ENCODE measurements at regions of chr3 and their contacts with region 1.

Region 1: DNA sequence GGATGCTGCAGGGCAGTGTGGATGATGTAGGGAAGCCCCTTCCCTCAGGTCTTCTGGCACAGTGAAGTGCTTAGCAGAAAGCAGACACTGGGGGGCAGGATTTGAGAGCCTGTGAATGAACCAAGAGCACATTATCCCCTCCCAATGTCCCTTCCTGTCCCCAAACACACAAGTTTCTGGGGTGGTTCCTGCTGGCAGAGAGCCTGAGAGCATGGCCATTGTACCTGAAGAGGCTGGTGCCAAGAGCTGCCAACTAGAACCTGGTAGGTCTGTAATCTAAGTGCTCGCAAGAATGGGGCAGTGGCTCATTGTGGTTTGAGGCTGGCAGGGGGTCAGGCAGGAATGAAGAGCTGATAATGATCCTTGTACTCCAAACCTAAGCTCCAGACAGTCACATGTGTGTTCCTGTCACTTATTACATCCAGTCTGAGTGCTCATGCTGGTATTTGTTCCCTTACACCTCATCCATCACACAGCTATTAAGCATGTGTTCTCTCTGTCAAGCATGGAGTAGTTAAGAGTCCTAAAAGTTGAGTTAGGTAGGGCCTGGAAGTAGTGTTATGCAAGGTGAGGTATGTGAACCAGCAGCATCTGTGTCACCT is 6.7 kb upstream of the CCR1 start:
- DNase-seq: peak; percentile 44
- ATAC-seq: no peak
- H3K4me3 Mint-ChIP-seq: no peak overlapping the region
- H3K27ac Mint-ChIP-seq: no peak overlapping the region
- H3K4me1 Mint-ChIP-seq: no peaks in the 10 kb centered on the region
- H3K27me3 Mint-ChIP-seq: no peaks in the 10 kb centered on the region

Region 2: DNA sequence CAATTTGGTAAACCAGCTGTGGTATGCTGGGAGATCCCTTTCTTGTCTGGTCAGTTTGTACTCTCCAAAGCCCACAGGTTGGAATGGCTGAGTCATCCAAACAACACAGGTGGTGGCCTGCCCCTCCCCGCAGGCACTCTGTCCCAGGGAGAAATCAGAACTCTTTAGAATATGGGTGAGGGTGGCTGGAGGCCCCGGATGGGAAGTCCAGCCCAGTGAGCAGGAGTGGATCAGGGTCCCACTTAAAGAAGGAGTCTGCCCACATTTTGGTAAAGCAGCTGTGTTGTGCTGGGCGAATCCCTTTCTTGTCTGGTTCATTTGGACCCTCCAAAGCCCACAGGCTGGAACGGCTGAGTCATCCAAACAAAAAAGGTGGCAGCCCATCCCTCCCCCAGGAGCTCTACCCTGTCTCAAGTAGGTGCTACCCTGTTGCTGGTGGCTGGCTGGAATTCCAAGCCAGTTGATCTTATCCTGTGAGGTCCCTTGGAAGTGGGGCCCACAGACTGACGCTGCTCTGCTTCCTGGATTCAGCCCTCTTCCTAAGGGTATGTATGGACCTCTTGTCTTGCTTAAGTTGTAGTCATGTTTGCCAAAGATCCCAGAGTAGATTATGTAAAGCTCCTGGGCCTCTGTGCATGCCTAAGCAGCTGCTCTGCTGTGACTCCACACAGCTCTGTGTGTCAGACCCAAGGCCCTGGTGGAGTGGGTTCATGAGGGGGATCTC is 51.4 kb before region 1 on chr3:
- CTCF ChIA-PET with region 1: no interaction called
- POLR2A ChIA-PET with region 1: no interaction called
- intact Hi-C with region 1: no loop called
- DNase-seq: no peak
- ATAC-seq: no peak
- H3K4me3 Mint-ChIP-seq: no peak overlapping the region
- H3K27ac Mint-ChIP-seq: no peak overlapping the region
- H3K4me1 Mint-ChIP-seq: no peaks in the 10 kb centered on the region
- H3K27me3 Mint-ChIP-seq: peaks cover 3% of the 10 kb centered on the region

Region 3: GRCh38 chr3:46233194-46233593 is 18.3 kb after region 1 on chr3:
- CTCF ChIA-PET with region 1: no interaction called
- POLR2A ChIA-PET with region 1: no interaction called
- intact Hi-C with region 1: no loop called
- DNase-seq: no peak
- ATAC-seq: no peak
- H3K4me3 Mint-ChIP-seq: no peak overlapping the region
- H3K27ac Mint-ChIP-seq: no peak overlapping the region
- H3K4me1 Mint-ChIP-seq: no peaks in the 10 kb centered on the region
- H3K27me3 Mint-ChIP-seq: peaks cover 17% of the 10 kb centered on the region

Region 4: DNA sequence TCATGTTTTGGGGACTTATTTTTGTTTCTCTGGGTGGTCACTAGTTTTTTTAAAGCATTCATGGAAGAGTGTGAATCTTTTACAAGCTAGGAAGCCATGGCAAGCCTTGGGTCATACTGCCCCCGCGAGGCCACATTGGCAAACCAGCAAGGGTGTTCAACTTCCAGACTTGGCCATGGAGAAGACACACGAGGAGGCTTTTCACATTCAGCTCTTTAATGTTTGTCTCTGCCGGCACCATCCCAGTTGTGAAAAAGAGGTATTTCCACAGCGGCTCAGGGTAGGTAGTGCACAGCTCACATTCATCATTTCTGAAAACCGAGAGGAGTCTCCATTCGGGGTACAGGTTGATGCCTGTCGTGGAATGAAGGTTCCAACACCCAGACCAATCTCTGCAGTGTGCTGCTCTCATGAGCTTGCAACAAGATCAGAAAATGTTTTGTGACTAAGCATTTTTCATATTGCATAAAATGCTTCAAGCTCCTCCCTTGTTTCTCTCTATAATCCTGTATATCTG is 163.6 kb after region 1 on chr3:
- CTCF ChIA-PET with region 1: interaction called, 19 read pairs
- POLR2A ChIA-PET with region 1: no interaction called
- intact Hi-C with region 1: loop called in 1 of 2 experiments (anchors 5 kb)
- DNase-seq: peak; percentile 84
- ATAC-seq: peak; percentile 53
- H3K4me3 Mint-ChIP-seq: no peak overlapping the region
- H3K27ac Mint-ChIP-seq: no peak overlapping the region
- H3K4me1 Mint-ChIP-seq: peaks cover 28% of the 10 kb centered on the region
- H3K27me3 Mint-ChIP-seq: peaks cover 22% of the 10 kb centered on the region